Activated B cell treated with CpG ODN at 0.5 μM for 24 hours (primary cell): ENCODE measurements at regions of chr1 and their contacts with region 1.

Region 1: DNA sequence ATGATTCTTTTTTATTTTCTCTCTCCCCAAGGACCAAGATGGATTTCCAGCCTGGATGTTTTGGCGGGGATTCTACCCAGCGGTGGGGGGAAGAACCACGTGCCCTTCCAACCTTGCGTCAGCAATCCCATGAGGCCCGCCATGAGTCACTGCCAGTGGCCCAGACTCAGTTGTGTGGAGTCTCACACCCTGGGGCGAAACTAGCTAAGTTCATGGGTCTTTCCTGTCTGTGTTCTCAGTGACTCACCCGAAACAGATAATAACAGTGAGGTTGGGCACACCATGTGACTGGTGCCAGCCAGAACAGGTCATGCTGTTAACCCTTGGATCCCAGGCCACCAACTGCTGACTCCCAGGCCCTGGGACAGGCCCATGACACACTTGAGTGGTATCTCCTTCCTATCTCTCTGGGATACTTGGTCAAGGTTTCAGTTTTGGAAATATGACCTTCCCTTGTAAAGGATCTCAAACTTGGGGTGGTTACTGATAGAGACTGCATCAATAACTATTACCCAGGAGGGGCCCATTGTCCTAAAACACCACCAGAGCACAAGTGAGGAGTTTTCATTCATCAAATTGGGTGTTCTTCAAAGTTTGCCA is 98.0 kb upstream of the DUSP10 start:
- DNase-seq: peak; percentile 80
- ATAC-seq: peak; percentile 80
- H3K4me3 Mint-ChIP-seq: peak overlapping the region; percentile 29
- H3K27ac Mint-ChIP-seq: peak overlapping the region; percentile 95
- H3K4me1 Mint-ChIP-seq: peaks cover 50% of the 10 kb centered on the region
- H3K27me3 Mint-ChIP-seq: no peaks in the 10 kb centered on the region
- CTCF ChIP-seq: no peak

Region 2: DNA sequence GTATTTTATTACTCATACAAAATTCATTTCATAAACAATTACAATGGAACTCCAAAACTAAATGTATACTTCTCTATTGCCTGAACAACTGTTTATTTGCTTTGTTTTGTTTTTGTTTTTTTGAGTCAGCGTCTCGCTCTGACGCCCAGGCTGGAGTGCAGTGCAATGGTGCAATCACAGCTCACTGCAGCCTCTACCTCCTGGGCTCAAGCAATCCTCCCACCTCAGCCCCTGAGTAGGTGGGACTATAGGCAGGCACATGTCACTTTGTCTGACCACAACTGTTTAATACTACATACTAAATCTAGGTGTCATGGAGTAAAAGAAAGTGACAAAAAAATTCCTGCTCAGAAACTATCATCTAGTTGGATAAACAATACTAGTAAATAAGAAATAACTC is 1617.0 kb before region 1 on chr1:
- CTCF ChIA-PET with region 1: no interaction called
- POLR2A ChIA-PET with region 1: interaction called, 11 read pairs
- intact Hi-C with region 1: no loop called
- DNase-seq: no peak
- ATAC-seq: no peak
- H3K4me3 Mint-ChIP-seq: peak overlapping the region; percentile 67
- H3K27ac Mint-ChIP-seq: peak overlapping the region; percentile 86
- H3K4me1 Mint-ChIP-seq: peaks cover 91% of the 10 kb centered on the region
- H3K27me3 Mint-ChIP-seq: no peaks in the 10 kb centered on the region
- CTCF ChIP-seq: no peak

Region 3: DNA sequence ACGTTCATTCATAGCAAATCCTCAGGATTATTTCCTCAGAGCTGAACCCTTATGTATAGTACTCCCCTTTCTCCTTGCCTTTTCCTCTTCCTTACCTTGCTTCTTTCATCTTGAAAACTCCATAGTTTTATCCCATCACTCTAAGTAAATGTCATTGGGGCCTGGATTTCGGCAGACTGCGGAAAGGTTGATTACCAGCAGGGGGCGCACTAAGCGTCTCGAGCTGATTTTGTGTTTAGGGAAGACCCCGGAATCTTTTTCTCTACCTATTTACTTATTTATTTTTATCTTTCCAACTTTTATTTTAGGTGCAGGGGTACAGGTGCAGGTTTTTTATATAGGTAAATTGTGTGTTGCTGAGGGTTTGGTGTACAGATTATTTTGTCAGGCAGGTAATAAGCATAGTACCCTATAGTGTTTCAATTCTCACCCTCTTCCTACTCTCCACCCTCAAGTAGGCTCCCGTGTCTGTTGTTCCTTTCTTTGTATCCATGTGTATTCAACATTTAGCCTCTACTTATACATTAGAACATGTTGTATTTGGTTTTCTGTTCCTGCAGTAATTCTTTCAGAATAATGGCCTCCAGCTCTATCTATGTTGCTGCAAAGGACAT is 1064.5 kb before region 1 on chr1:
- CTCF ChIA-PET with region 1: no interaction called
- POLR2A ChIA-PET with region 1: no interaction called
- intact Hi-C with region 1: no loop called
- DNase-seq: peak; percentile 39
- ATAC-seq: no peak
- H3K4me3 Mint-ChIP-seq: no peak overlapping the region
- H3K27ac Mint-ChIP-seq: no peak overlapping the region
- H3K4me1 Mint-ChIP-seq: peaks cover 34% of the 10 kb centered on the region
- H3K27me3 Mint-ChIP-seq: no peaks in the 10 kb centered on the region
- CTCF ChIP-seq: peak; percentile 74

Region 4: DNA sequence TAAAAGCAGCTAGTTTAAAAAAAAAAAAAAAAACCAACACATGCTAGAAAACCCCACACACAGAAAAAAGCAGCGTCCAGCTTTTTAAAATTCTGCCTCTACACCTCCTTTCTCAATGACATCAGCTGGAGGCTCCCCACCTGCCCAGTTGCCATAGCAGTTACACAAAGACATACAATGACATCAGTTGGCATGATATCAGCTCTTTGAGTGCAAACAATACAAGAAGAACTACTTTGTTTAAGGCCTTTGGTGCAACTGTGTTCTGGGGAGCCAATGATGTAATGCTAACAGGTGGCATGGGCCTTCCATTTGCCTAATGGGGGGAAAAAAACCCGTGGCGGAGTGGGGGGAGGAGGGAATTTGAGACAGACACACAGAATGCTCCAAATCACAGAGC is 130.9 kb before region 1 on chr1:
- CTCF ChIA-PET with region 1: no interaction called
- POLR2A ChIA-PET with region 1: interaction called, 7 read pairs
- intact Hi-C with region 1: loop called (anchors 1 kb)
- DNase-seq: peak; percentile 20
- ATAC-seq: peak; percentile 32
- H3K4me3 Mint-ChIP-seq: peak overlapping the region; percentile 37
- H3K27ac Mint-ChIP-seq: peak overlapping the region; percentile 82
- H3K4me1 Mint-ChIP-seq: peaks cover 60% of the 10 kb centered on the region
- H3K27me3 Mint-ChIP-seq: no peaks in the 10 kb centered on the region
- CTCF ChIP-seq: no peak

Region 5: GRCh38 chr1:221809031-221810029 is 30.6 kb before region 1 on chr1:
- CTCF ChIA-PET with region 1: no interaction called
- POLR2A ChIA-PET with region 1: interaction called, 7 read pairs
- intact Hi-C with region 1: loop called (anchors 1 kb)
- DNase-seq: no peak
- ATAC-seq: peak; percentile 73
- H3K4me3 Mint-ChIP-seq: peak overlapping the region; percentile 52
- H3K27ac Mint-ChIP-seq: peak overlapping the region; percentile 91
- H3K4me1 Mint-ChIP-seq: peaks cover 72% of the 10 kb centered on the region
- H3K27me3 Mint-ChIP-seq: no peaks in the 10 kb centered on the region
- CTCF ChIP-seq: no peak

Region 6: GRCh38 chr1:221829327-221830015 is 10.4 kb before region 1 on chr1:
- CTCF ChIA-PET with region 1: interaction called, 5 read pairs
- POLR2A ChIA-PET with region 1: interaction called, 28 read pairs
- intact Hi-C with region 1: loop called (anchors 1 kb)
- DNase-seq: no peak
- ATAC-seq: peak; percentile 64
- H3K4me3 Mint-ChIP-seq: peak overlapping the region; percentile 66
- H3K27ac Mint-ChIP-seq: peak overlapping the region; percentile 90
- H3K4me1 Mint-ChIP-seq: peaks cover 58% of the 10 kb centered on the region
- H3K27me3 Mint-ChIP-seq: no peaks in the 10 kb centered on the region
- CTCF ChIP-seq: no peak

Region 7: GRCh38 chr1:221939607-221940006 is 99.7 kb after region 1 on chr1:
- CTCF ChIA-PET with region 1: interaction called, 4 read pairs
- POLR2A ChIA-PET with region 1: interaction called, 9 read pairs
- intact Hi-C with region 1: loop called (anchors 1 kb)
- DNase-seq: peak; percentile 49
- ATAC-seq: peak; percentile 95
- H3K4me3 Mint-ChIP-seq: peak overlapping the region; percentile 66
- H3K27ac Mint-ChIP-seq: peak overlapping the region; percentile 79
- H3K4me1 Mint-ChIP-seq: peaks cover 41% of the 10 kb centered on the region
- H3K27me3 Mint-ChIP-seq: no peaks in the 10 kb centered on the region
- CTCF ChIP-seq: no peak